ENCODE measurements at regions of chr3 and their contacts with region 1.

Region 1: DNA sequence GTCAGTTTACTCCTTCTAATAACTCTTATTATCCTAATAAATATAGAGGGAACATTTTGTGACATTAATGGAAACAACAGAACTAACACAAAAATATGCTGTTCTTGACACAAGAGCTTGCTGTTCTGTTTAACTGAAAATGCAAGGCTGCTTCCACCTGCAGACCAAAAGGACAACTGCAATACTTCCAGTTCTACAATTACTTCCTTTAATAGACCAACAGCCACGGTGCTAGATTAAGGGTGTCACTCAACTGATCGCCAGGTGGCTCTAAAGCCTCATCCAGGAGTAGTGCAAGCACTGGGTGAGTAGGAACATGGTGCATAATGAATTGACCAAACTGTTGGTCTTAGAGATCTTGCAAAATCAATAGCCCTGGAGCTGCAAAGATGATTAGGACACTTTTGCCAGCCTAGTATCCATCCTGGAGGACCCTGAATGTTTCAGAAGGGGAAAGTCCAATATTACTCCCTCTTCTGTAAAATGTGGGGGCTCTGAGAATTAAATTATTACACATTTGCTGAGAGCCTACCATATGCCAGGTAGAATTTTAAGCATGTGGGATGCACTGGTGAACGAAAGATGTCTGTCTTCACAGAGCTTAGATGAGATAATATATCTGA is 3.6 kb upstream of the CLDN16 start:
- DNase-seq: peak; percentile 90
- H3K4me3 ChIP-seq: no peak overlapping the region
- H3K27ac ChIP-seq: peak overlapping the region; percentile 28
- H3K4me1 ChIP-seq: peaks cover 52% of the 10 kb centered on the region
- H3K27me3 ChIP-seq: no peaks in the 10 kb centered on the region
- CTCF ChIP-seq: peak; percentile 90 to 98

Region 2: GRCh38 chr3:190017521-190018288 is 366.6 kb before region 1 on chr3:
- CTCF ChIA-PET with region 1: no interaction called
- dilution Hi-C with region 1: no loop called
- in situ Hi-C with region 1: no loop called
- intact Hi-C with region 1: loop called (anchors 1 kb)
- DNase-seq: peak; percentile 70
- H3K4me3 ChIP-seq: no peak overlapping the region
- H3K27ac ChIP-seq: peak overlapping the region; percentile 19
- H3K4me1 ChIP-seq: peaks cover 42% of the 10 kb centered on the region
- H3K27me3 ChIP-seq: no peaks in the 10 kb centered on the region
- CTCF ChIP-seq: peak; percentile 41 to 53

Region 3: DNA sequence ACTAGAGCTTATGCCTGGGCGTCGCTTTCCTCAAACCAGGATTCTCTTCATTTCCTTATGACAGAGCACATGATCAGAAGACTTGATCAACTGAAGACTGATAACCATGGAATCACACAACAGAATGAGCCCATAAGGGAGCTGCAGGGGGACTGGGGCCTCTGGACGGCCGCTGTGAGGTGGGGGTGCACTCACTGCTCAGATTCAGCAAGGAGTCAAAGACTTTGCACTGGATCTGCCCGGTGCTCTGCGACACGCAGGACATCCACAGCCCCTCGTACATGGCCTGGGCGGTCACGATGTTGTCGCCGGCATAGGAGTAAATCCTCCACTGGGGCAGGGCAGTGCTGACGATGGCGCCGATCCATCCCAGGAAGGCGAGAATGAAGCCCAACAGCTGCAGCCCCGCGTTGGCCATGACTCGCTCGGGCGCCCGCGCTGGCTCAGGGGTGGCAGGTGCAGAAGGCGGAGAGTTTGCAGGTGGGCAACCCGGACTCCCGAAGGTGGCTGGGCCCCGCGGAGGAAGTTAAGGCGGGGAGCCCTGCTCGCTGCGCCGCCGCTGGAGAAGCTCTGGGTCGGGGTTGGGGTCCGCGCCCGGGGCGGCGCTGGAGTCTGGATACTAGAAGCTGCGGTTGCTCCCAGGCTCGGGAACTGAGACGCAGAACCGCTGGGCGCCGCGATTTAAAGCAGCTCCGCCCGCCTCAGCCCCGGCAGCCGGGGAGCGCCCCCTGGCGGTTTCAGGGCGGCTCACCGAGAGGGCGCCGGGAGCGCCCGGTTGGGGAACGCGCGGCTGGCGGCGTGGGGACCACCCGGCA is 62.4 kb before region 1 on chr3 and contains the start of gene CLDN1:
- CTCF ChIA-PET with region 1: no interaction called
- dilution Hi-C with region 1: no loop called
- in situ Hi-C with region 1: loop called in 1 of 2 experiments (anchors 5 kb)
- intact Hi-C with region 1: loop called (anchors 1 kb)
- DNase-seq: peak; percentile 74
- H3K4me3 ChIP-seq: peak within 1 kb of the TSS; percentile 43 to 72 (median 51)
- H3K27ac ChIP-seq: peak within 1 kb of the TSS; percentile 9
- H3K4me1 ChIP-seq: peaks cover 37% of the 10 kb centered on the region
- H3K27me3 ChIP-seq: no peaks in the 10 kb centered on the region
- CTCF ChIP-seq: peak; percentile 69 to 97
- total RNA-seq, gene CLDN1: 12.3 to 78.7 TPM

Region 4: GRCh38 chr3:190366145-190366544 is 18.2 kb before region 1 on chr3:
- CTCF ChIA-PET with region 1: no interaction called
- dilution Hi-C with region 1: no loop called
- in situ Hi-C with region 1: no loop called
- intact Hi-C with region 1: loop called (anchors 1 kb)
- DNase-seq: peak; percentile 72
- H3K4me3 ChIP-seq: no peak overlapping the region
- H3K27ac ChIP-seq: peak overlapping the region; percentile 65
- H3K4me1 ChIP-seq: peaks cover 36% of the 10 kb centered on the region
- H3K27me3 ChIP-seq: no peaks in the 10 kb centered on the region
- CTCF ChIP-seq: no peak

Region 5: DNA sequence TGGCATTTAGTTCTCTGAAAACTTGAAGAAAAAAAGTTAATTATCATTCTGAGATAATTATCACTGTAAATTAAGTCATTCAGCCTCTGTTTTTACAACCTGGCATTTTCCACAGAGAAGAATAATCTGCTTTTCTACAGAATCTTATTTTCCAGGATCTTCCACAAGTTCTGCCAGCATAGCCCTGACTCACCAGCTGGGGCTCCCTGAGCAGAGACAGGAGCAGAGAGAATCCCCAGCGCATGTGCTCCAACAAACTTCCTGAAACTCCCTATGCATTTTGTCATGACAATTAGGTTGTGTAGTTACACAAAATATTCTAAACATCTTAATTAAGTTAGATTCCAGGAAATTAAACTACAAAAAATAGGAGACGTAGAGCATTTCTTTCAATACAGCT is 97.4 kb after region 1 on chr3:
- CTCF ChIA-PET with region 1: no interaction called
- dilution Hi-C with region 1: no loop called
- in situ Hi-C with region 1: no loop called
- intact Hi-C with region 1: no loop called
- DNase-seq: no peak
- H3K4me3 ChIP-seq: no peak overlapping the region
- H3K27ac ChIP-seq: no peak overlapping the region
- H3K4me1 ChIP-seq: peaks cover 7% of the 10 kb centered on the region
- H3K27me3 ChIP-seq: no peaks in the 10 kb centered on the region
- CTCF ChIP-seq: no peak

Region 6: DNA sequence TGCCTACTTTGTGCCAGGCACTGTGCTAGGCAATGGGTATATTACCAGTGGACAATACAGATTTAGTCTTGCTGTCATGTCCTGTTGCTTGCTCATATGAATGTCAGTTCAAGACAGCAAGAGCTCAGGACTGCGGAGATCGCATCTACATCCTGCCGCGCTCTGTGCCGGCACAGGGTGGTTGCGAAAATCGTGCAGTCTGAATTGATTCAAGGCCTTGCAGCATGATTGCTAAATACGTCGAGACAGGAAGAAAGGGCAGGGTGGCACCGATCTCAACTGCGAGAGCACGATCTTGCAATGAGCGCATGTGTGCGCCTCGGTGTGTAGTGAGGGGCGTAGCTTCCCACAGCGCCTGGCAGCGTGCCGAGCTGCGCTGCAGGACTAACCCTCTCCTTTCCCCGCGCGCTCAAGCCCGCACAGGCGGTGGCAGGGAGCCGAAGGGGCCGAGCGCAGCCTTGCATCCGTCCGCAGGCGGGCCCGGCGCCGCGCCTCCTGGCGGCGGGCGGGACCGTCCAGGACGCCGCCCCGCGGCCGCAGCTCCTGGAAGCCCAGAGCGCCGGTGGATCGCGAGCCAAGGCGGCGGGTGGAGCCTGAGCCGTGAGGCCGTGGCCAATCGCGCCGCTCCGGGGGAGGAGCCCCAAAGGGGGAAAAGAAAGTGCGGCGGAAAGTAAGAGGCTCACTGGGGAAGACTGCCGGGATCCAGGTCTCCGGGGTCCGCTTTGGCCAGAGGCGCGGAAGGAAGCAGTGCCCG is 129.2 kb after region 1 on chr3 and contains the start of gene IL1RAP:
- CTCF ChIA-PET with region 1: no interaction called
- dilution Hi-C with region 1: no loop called
- in situ Hi-C with region 1: no loop called
- intact Hi-C with region 1: loop called (anchors 5 kb)
- DNase-seq: peak; percentile 97
- H3K4me3 ChIP-seq: peak within 1 kb of the TSS; percentile 89 to 96 (median 93)
- H3K27ac ChIP-seq: peak within 1 kb of the TSS; percentile 88
- H3K4me1 ChIP-seq: peaks cover 31% of the 10 kb centered on the region
- H3K27me3 ChIP-seq: no peaks in the 10 kb centered on the region
- CTCF ChIP-seq: peak; percentile 39 to 42
- total RNA-seq, gene IL1RAP: 94.2 to 111 TPM